Naive thymus-derived CD4-positive, alpha-beta T cell (primary cell): ENCODE measurements at regions of chr1 and their contacts with region 1.

Region 1: GRCh38 chr1:211578640-211579433 is at the start of gene SLC30A1:
- DNase-seq: peak; percentile 99
- ATAC-seq: peak; percentile 97
- H3K4me3 ChIP-seq: peak within 1 kb of the TSS; percentile 66
- H3K4me3 Mint-ChIP-seq: peak within 1 kb of the TSS; percentile 88 to 96 (median 92)
- H3K27ac ChIP-seq: peak within 1 kb of the TSS; percentile 85
- H3K27ac Mint-ChIP-seq: peak within 1 kb of the TSS; percentile 72 to 93 (median 88)
- H3K4me1 ChIP-seq: peaks cover 3 to 5% of the 10 kb centered on the region in 2 donors
- H3K4me1 Mint-ChIP-seq: peaks cover 21 to 48% (median 44%) of the 10 kb centered on the region in 7 donors
- H3K27me3 ChIP-seq: no peaks in the 10 kb centered on the region
- H3K27me3 Mint-ChIP-seq: peaks cover 0 to 12% (median 0%) of the 10 kb centered on the region in 5 donors
- total RNA-seq, gene SLC30A1: 5.8 to 12.1 (median 8.8) TPM

Region 2: DNA sequence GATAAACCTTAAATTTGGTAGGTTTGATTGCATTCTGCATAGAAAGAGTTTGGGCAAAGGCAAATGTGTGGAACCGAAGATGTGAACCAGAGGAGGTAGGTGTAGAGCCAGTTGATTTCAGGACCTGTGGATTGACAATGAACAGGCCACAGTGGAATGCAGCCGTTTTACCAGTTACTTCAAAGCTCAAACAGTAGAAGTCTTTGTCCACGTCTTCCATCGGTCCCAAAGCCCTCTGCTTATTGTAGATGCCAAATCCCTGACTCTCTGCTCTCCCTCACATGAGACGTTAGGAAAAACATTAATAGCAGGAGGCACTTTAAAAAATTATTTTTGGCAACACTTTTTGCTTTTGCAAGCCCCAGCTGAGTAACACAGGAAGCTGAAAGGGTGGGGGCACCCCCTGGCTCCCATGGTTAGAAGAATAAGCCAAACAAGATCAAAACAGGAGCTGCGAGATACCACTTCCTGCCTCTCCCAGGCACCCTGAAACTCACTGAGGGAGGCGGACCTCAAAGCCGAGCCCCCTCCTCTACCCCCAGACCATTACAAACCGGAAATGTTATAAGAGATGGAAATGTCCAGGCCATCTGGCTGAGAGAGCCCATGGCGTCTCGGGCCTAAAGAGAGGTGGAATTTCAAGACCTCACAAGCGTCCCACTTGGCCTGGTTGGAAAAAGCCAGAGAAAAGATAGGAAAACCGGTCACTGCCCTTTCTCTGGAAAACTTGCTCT is 1809.5 kb before region 1 on chr1:
- CTCF ChIA-PET with region 1: no interaction called
- POLR2A ChIA-PET with region 1: no interaction called
- intact Hi-C with region 1: loop called (anchors 5 kb)
- DNase-seq: peak in 8 of 9 donors; percentile 73 to 85 (median 83)
- ATAC-seq: peak; percentile 80
- H3K4me3 ChIP-seq: peak overlapping the region; percentile 88
- H3K4me3 Mint-ChIP-seq: no peak overlapping the region
- H3K27ac ChIP-seq: peak overlapping the region; percentile 83
- H3K27ac Mint-ChIP-seq: no peak overlapping the region
- H3K4me1 ChIP-seq: peaks cover 44 to 58% of the 10 kb centered on the region in 2 donors
- H3K4me1 Mint-ChIP-seq: peaks cover 31 to 40% (median 35%) of the 10 kb centered on the region in 7 donors
- H3K27me3 ChIP-seq: no peaks in the 10 kb centered on the region
- H3K27me3 Mint-ChIP-seq: no peaks in the 10 kb centered on the region

Region 3: GRCh38 chr1:211372463-211372862 is 206.4 kb before region 1 on chr1:
- CTCF ChIA-PET with region 1: no interaction called
- POLR2A ChIA-PET with region 1: no interaction called
- intact Hi-C with region 1: no loop called
- DNase-seq: no peak
- ATAC-seq: no peak
- H3K4me3 ChIP-seq: no peak overlapping the region
- H3K4me3 Mint-ChIP-seq: no peak overlapping the region
- H3K27ac ChIP-seq: no peak overlapping the region
- H3K27ac Mint-ChIP-seq: peak overlapping the region in 1 of 9 donors; percentile 71
- H3K4me1 ChIP-seq: no peaks in the 10 kb centered on the region
- H3K4me1 Mint-ChIP-seq: peaks cover 4 to 21% (median 11%) of the 10 kb centered on the region in 7 donors
- H3K27me3 ChIP-seq: no peaks in the 10 kb centered on the region
- H3K27me3 Mint-ChIP-seq: no peaks in the 10 kb centered on the region

Region 4: GRCh38 chr1:211514030-211514754 is 64.6 kb before region 1 on chr1:
- CTCF ChIA-PET with region 1: interaction called, 3 read pairs
- POLR2A ChIA-PET with region 1: no interaction called
- intact Hi-C with region 1: loop called (anchors 1 kb)
- DNase-seq: peak; percentile 16 to 71 (median 46)
- ATAC-seq: peak; percentile 80
- H3K4me3 ChIP-seq: no peak overlapping the region
- H3K4me3 Mint-ChIP-seq: peak overlapping the region; percentile 61 to 84 (median 73)
- H3K27ac ChIP-seq: no peak overlapping the region
- H3K27ac Mint-ChIP-seq: peak overlapping the region in 2 of 9 donors; percentile 46 to 63
- H3K4me1 ChIP-seq: peaks cover 10 to 11% of the 10 kb centered on the region in 2 donors
- H3K4me1 Mint-ChIP-seq: peaks cover 5 to 35% (median 20%) of the 10 kb centered on the region in 7 donors
- H3K27me3 ChIP-seq: no peaks in the 10 kb centered on the region
- H3K27me3 Mint-ChIP-seq: peaks cover 0 to 12% (median 5%) of the 10 kb centered on the region in 5 donors

Region 5: GRCh38 chr1:211527006-211527405 is 51.8 kb before region 1 on chr1:
- CTCF ChIA-PET with region 1: no interaction called
- POLR2A ChIA-PET with region 1: no interaction called
- intact Hi-C with region 1: no loop called
- DNase-seq: no peak
- ATAC-seq: no peak
- H3K4me3 ChIP-seq: no peak overlapping the region
- H3K4me3 Mint-ChIP-seq: no peak overlapping the region
- H3K27ac ChIP-seq: no peak overlapping the region
- H3K27ac Mint-ChIP-seq: peak overlapping the region in 1 of 9 donors; percentile 44
- H3K4me1 ChIP-seq: no peaks in the 10 kb centered on the region
- H3K4me1 Mint-ChIP-seq: peaks cover 7 to 19% (median 14%) of the 10 kb centered on the region in 7 donors
- H3K27me3 ChIP-seq: no peaks in the 10 kb centered on the region
- H3K27me3 Mint-ChIP-seq: peaks cover 0 to 4% (median 0%) of the 10 kb centered on the region in 5 donors

Region 6: GRCh38 chr1:211654838-211655787 is 76.3 kb after region 1 on chr1:
- CTCF ChIA-PET with region 1: interaction called, 13 read pairs
- POLR2A ChIA-PET with region 1: no interaction called
- intact Hi-C with region 1: loop called (anchors 1 kb)
- DNase-seq: peak; percentile 60 to 82 (median 71)
- ATAC-seq: peak; percentile 95
- H3K4me3 ChIP-seq: no peak overlapping the region
- H3K4me3 Mint-ChIP-seq: no peak overlapping the region
- H3K27ac ChIP-seq: no peak overlapping the region
- H3K27ac Mint-ChIP-seq: no peak overlapping the region
- H3K4me1 ChIP-seq: no peaks in the 10 kb centered on the region
- H3K4me1 Mint-ChIP-seq: peaks cover 0 to 5% (median 0%) of the 10 kb centered on the region in 7 donors
- H3K27me3 ChIP-seq: no peaks in the 10 kb centered on the region
- H3K27me3 Mint-ChIP-seq: peaks cover 0 to 13% (median 0%) of the 10 kb centered on the region in 5 donors

Region 7: DNA sequence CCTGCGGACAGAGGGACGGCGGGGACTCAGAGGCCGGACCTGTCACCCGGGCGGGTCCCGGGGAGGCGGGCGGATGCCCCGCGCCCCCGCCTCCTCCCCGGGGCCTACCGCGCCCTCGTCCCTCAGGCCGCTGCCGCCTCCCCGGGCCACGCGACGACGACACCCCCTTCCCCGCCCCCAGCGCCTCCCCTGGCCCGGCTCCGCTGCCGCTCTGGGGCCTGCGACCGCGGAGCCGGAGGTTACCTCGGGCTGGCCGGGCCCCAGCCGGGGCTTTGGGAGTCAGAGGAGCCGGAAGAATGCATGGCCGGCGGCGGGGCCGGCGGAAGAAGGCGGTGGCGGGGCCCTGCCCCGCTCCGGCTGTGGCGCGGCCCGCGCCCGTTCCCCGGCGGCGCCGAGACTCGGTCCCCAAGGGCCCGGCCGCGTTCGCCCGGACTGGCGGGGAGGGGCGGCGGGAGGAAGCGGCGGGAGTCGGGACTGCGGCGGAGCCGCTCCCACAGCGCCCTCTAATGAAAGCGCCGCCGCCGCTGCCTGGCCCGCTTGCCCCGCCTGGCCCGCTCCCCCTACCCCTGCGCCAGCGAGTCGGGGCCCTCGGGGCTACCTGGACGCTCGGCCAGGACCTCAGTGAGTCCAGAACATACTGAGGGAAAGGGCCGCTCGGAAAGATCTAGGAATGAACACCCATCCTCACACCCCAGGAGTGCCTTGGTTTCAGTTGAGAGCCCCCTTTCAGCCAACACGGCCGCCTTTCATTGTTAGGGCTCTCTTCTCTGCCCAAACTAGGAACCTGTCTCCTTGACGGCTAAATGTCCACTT is 251.7 kb after region 1 on chr1 and contains the start of gene LPGAT1:
- CTCF ChIA-PET with region 1: no interaction called
- POLR2A ChIA-PET with region 1: no interaction called
- intact Hi-C with region 1: loop called (anchors 5 kb)
- DNase-seq: peak; percentile 28 to 81 (median 54)
- ATAC-seq: peak; percentile 92
- H3K4me3 ChIP-seq: peak within 1 kb of the TSS; percentile 68
- H3K4me3 Mint-ChIP-seq: peak within 1 kb of the TSS; percentile 88 to 97 (median 90)
- H3K27ac ChIP-seq: peak within 1 kb of the TSS; percentile 64
- H3K27ac Mint-ChIP-seq: peak within 1 kb of the TSS; percentile 60 to 94 (median 85)
- H3K4me1 ChIP-seq: peaks cover 20 to 40% of the 10 kb centered on the region in 2 donors
- H3K4me1 Mint-ChIP-seq: peaks cover 34 to 69% (median 64%) of the 10 kb centered on the region in 7 donors
- H3K27me3 ChIP-seq: no peaks in the 10 kb centered on the region
- H3K27me3 Mint-ChIP-seq: peaks cover 0 to 3% (median 0%) of the 10 kb centered on the region in 5 donors
- total RNA-seq, gene LPGAT1: 11.7 to 76.1 (median 19.3) TPM

Region 8: DNA sequence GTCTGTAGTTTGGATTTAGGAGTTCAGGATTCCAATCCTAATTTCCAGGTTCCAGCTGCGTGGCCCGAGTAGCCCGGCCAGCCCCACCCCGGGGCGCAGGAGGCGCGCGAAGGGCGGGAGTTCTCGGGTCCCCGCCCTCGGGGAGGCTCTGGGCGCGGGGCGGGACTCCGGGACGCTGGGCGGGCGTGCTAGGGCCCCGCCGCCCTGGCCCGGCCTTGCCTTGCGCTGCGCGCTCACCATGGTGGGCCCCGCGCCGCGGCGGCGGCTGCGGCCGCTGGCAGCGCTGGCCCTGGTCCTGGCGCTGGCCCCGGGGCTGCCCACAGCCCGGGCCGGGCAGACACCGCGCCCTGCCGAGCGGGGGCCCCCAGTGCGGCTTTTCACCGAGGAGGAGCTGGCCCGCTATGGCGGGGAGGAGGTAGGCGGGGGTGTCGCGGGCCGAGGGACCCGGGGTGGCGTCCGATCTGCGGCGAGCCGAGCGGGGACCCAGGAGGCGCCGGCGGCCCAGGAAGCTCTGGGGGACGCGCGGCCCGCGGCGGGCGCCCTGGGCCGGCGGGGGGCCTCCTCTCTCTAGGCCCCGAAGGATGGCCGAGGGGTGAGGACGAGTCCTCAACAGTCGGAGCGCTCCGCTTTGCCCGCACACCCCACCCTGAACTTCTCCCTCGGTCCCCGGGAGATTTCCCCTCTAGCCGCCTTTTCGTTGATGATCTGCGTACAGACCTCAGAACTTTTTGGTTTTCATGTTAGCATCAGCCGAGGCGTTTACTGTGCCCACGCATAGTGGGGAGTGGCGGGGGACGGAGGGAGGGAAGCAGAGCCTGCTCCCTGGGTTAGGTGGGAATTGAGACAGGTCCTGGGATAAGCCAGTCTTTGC is 854.1 kb after region 1 on chr1 and contains the start of gene NENF:
- CTCF ChIA-PET with region 1: no interaction called
- POLR2A ChIA-PET with region 1: no interaction called
- intact Hi-C with region 1: loop called (anchors 2 to 5 kb)
- DNase-seq: peak; percentile 53 to 85 (median 72)
- ATAC-seq: peak; percentile 99
- H3K4me3 ChIP-seq: peak within 1 kb of the TSS; percentile 62
- H3K4me3 Mint-ChIP-seq: peak within 1 kb of the TSS; percentile 77 to 87 (median 82)
- H3K27ac ChIP-seq: peak within 1 kb of the TSS; percentile 77
- H3K27ac Mint-ChIP-seq: peak within 1 kb of the TSS; percentile 42 to 86 (median 63)
- H3K4me1 ChIP-seq: peaks cover 9 to 21% of the 10 kb centered on the region in 2 donors
- H3K4me1 Mint-ChIP-seq: peaks cover 18 to 44% (median 30%) of the 10 kb centered on the region in 7 donors
- H3K27me3 ChIP-seq: no peaks in the 10 kb centered on the region
- H3K27me3 Mint-ChIP-seq: peaks cover 0 to 4% (median 0%) of the 10 kb centered on the region in 5 donors
- total RNA-seq, gene NENF: 16.0 to 23.5 (median 21.0) TPM

Region 9: GRCh38 chr1:213015099-213016050 is 1436.5 kb after region 1 on chr1 and contains the start of gene ANGEL2:
- CTCF ChIA-PET with region 1: no interaction called
- POLR2A ChIA-PET with region 1: no interaction called
- intact Hi-C with region 1: loop called in 1 of 2 experiments (anchors 1 kb)
- DNase-seq: peak; percentile 77 to 97 (median 93)
- ATAC-seq: peak; percentile 99
- H3K4me3 ChIP-seq: peak within 1 kb of the TSS; percentile 87
- H3K4me3 Mint-ChIP-seq: peak within 1 kb of the TSS; percentile 92 to 100 (median 100)
- H3K27ac ChIP-seq: peak within 1 kb of the TSS; percentile 82
- H3K27ac Mint-ChIP-seq: peak within 1 kb of the TSS; percentile 94 to 100 (median 99)
- H3K4me1 ChIP-seq: peaks cover 12 to 19% of the 10 kb centered on the region in 2 donors
- H3K4me1 Mint-ChIP-seq: peaks cover 26 to 47% (median 40%) of the 10 kb centered on the region in 7 donors
- H3K27me3 ChIP-seq: no peaks in the 10 kb centered on the region
- H3K27me3 Mint-ChIP-seq: peaks cover 0 to 7% (median 0%) of the 10 kb centered on the region in 5 donors
- total RNA-seq, gene ANGEL2: 57.8 to 96.5 (median 63.4) TPM